Thyroid gland (tissue), 4 donors: ENCODE measurements at regions of chr11 and their contacts with region 1.

Region 1: GRCh38 chr11:74726547-74727182 is 4.6 kb downstream of the CHRDL2 start:
- DNase-seq: peak; percentile 73 to 77
- H3K4me3 ChIP-seq: no peak overlapping the region
- H3K27ac ChIP-seq: no peak overlapping the region
- H3K4me1 ChIP-seq: peaks cover 3 to 4% of the 10 kb centered on the region in 2 donors
- H3K27me3 ChIP-seq: no peaks in the 10 kb centered on the region
- CTCF ChIP-seq: peak; percentile 79 to 95 (median 84)
- POLR2A ChIP-seq: no peak

Region 2: GRCh38 chr11:74611369-74611861 is 115.2 kb before region 1 on chr11:
- intact Hi-C with region 1: loop called (anchors 5 kb)
- DNase-seq: no peak
- H3K4me3 ChIP-seq: no peak overlapping the region
- H3K27ac ChIP-seq: peak overlapping the region in 1 of 3 donors; percentile 10
- H3K4me1 ChIP-seq: no peaks in the 10 kb centered on the region
- H3K27me3 ChIP-seq: no peaks in the 10 kb centered on the region
- CTCF ChIP-seq: peak; percentile 10 to 61 (median 34)
- POLR2A ChIP-seq: no peak

Region 3: GRCh38 chr11:74634537-74634936 is 92.1 kb before region 1 on chr11:
- intact Hi-C with region 1: loop called (anchors 10 kb)
- DNase-seq: peak; percentile 16 to 30
- H3K4me3 ChIP-seq: no peak overlapping the region
- H3K27ac ChIP-seq: no peak overlapping the region
- H3K4me1 ChIP-seq: peaks cover 0 to 14% of the 10 kb centered on the region in 2 donors
- H3K27me3 ChIP-seq: no peaks in the 10 kb centered on the region
- CTCF ChIP-seq: peak in 4 of 6 experiments; percentile 10 to 37 (median 34)
- POLR2A ChIP-seq: no peak